ENCODE measurements at regions of chr5 and their contacts with region 1.

Region 1: DNA sequence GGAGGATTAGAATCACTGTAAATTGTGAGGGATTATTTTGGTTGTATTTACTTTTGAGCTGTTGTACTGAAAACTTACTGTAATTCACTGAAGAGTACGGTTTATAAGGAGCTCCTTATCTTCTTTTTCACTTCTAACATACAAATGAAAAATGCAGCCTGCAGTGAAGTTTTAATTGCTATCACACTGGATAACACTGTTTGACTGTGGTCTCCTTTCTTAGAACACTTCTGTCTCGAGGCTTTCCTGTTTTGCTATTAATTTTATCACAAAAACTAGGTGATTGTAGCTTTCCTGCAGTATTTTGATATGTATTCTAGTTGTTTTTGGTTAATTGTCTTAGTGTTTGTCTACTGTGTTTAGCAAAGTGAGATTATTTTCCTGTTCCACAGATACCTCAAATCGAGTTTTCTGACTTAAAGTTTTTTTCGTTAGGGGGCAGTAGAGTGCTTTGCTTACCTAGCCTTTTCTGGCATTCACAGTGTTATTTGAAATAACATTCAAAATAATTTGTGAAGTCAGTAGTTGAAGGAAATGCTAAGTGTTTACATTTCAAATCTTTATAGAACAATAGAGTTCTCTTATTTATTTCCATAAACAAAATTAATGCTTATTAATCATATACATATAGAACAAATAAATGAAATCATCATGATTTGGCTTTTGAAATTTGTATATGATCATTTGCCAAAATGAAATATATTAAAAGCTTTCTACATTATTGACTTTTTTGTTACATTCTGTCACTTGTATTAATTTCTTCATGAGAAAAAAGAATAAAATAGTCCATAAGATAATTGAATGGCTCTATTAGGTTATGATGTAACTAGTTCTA is 52.9 kb downstream of the COMMD10 start:
- DNase-seq: peak in 1 of 2 experiments; percentile 54
- H3K4me3 ChIP-seq: no peak overlapping the region
- H3K4me3 Mint-ChIP-seq: no peak overlapping the region
- H3K27ac Mint-ChIP-seq: no peak overlapping the region
- H3K4me1 ChIP-seq: no peaks in the 10 kb centered on the region
- H3K4me1 Mint-ChIP-seq: no peaks in the 10 kb centered on the region
- H3K27me3 ChIP-seq: no peaks in the 10 kb centered on the region
- H3K27me3 Mint-ChIP-seq: no peaks in the 10 kb centered on the region
- CTCF ChIP-seq: peak; percentile 73 to 76

Region 2: DNA sequence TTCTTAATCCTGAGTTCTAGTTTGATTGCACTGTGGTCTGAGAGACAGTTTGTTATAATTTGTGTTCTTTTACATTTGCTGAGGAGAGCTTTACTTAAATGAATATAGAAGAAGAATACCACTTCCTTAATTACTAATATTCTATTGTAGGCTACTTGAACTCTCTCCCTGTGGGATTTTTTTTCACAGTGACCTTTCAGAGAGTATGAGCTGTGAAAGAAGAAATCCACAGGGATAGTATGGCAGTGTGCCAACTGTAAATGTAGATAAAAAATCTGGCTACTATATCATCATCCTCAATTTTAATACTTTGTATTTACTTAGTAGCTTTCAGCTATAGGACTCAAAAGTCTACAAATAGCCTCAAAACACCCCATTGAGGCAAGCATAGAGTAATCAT is 14.4 kb after region 1 on chr5:
- CTCF ChIA-PET with region 1: no interaction called
- POLR2A ChIA-PET with region 1: no interaction called
- intact Hi-C with region 1: no loop called
- DNase-seq: no peak
- H3K4me3 ChIP-seq: no peak overlapping the region
- H3K4me3 Mint-ChIP-seq: no peak overlapping the region
- H3K27ac Mint-ChIP-seq: no peak overlapping the region
- H3K4me1 ChIP-seq: no peaks in the 10 kb centered on the region
- H3K4me1 Mint-ChIP-seq: no peaks in the 10 kb centered on the region
- H3K27me3 ChIP-seq: no peaks in the 10 kb centered on the region
- H3K27me3 Mint-ChIP-seq: no peaks in the 10 kb centered on the region
- CTCF ChIP-seq: no peak

Region 3: GRCh38 chr5:116299752-116300640 is 162.2 kb after region 1 on chr5:
- CTCF ChIA-PET with region 1: no interaction called
- POLR2A ChIA-PET with region 1: no interaction called
- intact Hi-C with region 1: loop called (anchors 5 kb)
- DNase-seq: no peak
- H3K4me3 ChIP-seq: no peak overlapping the region
- H3K4me3 Mint-ChIP-seq: no peak overlapping the region
- H3K27ac Mint-ChIP-seq: no peak overlapping the region
- H3K4me1 ChIP-seq: peaks cover 10% of the 10 kb centered on the region
- H3K4me1 Mint-ChIP-seq: peaks cover 6% of the 10 kb centered on the region
- H3K27me3 ChIP-seq: no peaks in the 10 kb centered on the region
- H3K27me3 Mint-ChIP-seq: no peaks in the 10 kb centered on the region
- CTCF ChIP-seq: no peak

Region 4: GRCh38 chr5:116557669-116558271 is 420.0 kb after region 1 on chr5:
- CTCF ChIA-PET with region 1: no interaction called
- POLR2A ChIA-PET with region 1: no interaction called
- intact Hi-C with region 1: loop called (anchors 5 kb)
- DNase-seq: peak in 1 of 2 experiments; percentile 43
- H3K4me3 ChIP-seq: no peak overlapping the region
- H3K4me3 Mint-ChIP-seq: no peak overlapping the region
- H3K27ac Mint-ChIP-seq: no peak overlapping the region
- H3K4me1 ChIP-seq: no peaks in the 10 kb centered on the region; the same call in 1 of the 2 replicates
- H3K4me1 Mint-ChIP-seq: no peaks in the 10 kb centered on the region
- H3K27me3 ChIP-seq: no peaks in the 10 kb centered on the region
- H3K27me3 Mint-ChIP-seq: no peaks in the 10 kb centered on the region
- CTCF ChIP-seq: peak; percentile 55 to 69